ENCODE measurements at regions of chr18 and their contacts with region 1.

Region 1: DNA sequence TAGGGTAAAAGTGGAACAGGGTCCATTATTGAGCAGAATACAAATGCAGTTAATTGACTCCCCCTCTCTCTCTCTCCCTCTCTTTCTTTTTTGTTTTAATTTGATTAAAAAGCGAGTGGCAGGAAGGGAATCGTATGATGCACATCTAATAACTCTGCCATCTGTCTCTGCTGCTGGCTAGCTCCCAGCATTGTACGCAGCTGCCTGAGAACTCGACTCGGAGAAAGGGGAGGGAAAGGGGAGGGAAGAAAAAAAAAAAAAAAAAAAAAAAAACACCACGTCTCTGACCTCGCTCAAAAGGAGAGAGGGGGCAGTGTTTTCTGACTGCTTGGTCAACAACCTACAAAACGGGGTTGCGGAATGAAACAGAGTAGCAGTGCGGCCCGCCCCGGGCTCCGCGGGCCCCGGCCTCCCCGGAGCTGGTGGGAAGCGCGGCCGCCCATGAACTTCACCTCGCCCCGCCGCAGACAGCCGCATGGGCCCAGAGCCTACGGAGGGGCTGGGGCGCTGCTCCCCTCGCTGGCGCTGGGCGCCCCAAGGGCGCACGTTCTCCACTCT is 265.7 kb downstream of the TCF4 start:
- DNase-seq: peak; percentile 59 to 89
- H3K4me3 ChIP-seq: peak overlapping the region; percentile 67 to 69
- H3K27ac ChIP-seq: peak overlapping the region; percentile 78 to 92
- H3K4me1 ChIP-seq: peaks cover 0 to 29% of the 10 kb centered on the region in 2 donors
- H3K27me3 ChIP-seq: no peaks in the 10 kb centered on the region
- CTCF ChIP-seq: peak in 1 of 3 experiments; percentile 8

Region 2: DNA sequence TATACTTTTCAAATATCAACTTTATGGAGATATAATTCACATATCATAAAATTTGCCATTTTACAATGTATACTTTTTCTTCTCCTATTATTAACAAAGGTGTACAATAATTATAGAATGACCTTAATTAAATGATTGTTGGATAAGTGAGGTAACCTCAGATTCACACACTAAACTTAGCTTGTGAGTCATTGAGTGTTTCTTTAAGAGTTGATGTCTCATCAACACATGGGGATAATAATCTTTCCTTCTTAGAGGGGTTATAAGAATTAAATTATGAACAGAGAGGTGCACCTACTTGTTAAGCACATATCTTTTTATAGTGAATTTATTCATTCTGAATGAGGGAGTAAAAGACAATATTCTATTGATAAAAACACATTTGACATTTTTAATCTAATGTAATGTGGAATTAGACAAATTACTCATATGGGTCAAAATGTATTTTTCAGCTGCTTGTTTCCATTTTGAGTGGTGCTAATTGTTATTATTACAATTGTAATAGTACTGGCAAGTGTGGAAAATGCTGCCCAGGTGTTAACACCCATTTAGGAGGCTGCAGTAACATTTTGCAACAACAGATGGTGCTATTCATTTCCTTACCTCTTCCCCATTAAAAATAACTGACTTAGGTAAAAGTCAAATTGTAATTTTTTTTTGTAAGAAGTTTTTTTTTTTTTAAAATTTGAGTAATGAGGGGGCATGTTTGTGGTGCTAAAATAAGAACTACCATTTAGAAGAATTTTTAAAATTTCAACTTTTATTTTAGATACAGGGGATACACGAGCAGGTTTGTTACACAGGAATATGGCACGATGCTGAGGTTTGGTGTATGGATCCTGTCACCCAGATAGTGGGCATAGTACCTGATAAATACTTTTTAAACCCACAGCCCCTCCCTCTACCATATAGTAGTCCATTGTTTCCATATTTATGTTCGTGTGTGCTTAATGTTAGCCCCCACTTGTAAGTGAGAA is 763.4 kb before region 1 on chr18:
- intact Hi-C with region 1: no loop called
- DNase-seq: no peak
- H3K4me3 ChIP-seq: no peak overlapping the region
- H3K27ac ChIP-seq: no peak overlapping the region
- H3K4me1 ChIP-seq: no peaks in the 10 kb centered on the region
- H3K27me3 ChIP-seq: no peaks in the 10 kb centered on the region
- CTCF ChIP-seq: peak in 1 of 3 experiments; percentile 31

Region 3: DNA sequence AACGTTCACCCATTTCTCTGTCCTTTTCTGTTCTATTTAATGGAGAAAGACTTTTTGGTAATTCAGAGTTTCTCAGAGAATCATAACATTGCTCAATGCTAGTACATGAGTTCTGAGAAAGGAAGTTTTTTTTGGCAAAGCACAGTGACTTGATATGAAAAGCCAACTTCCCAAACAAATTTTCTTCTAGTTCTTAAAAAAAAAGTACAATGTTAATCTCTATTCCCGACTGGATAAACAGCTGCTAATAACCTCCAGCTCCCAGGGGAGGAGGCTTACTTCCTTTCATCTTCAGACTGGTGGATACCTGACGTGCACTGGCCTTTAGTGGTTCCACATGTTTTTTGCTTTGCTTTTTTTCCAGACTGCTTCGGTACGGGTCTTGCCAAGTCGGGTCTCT is 78.4 kb before region 1 on chr18:
- intact Hi-C with region 1: loop called (anchors 2 kb)
- DNase-seq: peak in 1 of 2 donors; percentile 74
- H3K4me3 ChIP-seq: peak overlapping the region; percentile 42 to 45
- H3K27ac ChIP-seq: peak overlapping the region; percentile 80 to 87
- H3K4me1 ChIP-seq: peaks cover 0 to 33% of the 10 kb centered on the region in 2 donors
- H3K27me3 ChIP-seq: no peaks in the 10 kb centered on the region
- CTCF ChIP-seq: no peak

Region 4: GRCh38 chr18:55272510-55273243 is 49.6 kb before region 1 on chr18:
- intact Hi-C with region 1: loop called (anchors 5 kb)
- DNase-seq: peak in 1 of 2 donors; percentile 67
- H3K4me3 ChIP-seq: no peak overlapping the region
- H3K27ac ChIP-seq: peak overlapping the region; percentile 48 to 70
- H3K4me1 ChIP-seq: peaks cover 0 to 3% of the 10 kb centered on the region in 2 donors
- H3K27me3 ChIP-seq: no peaks in the 10 kb centered on the region
- CTCF ChIP-seq: no peak

Region 5: DNA sequence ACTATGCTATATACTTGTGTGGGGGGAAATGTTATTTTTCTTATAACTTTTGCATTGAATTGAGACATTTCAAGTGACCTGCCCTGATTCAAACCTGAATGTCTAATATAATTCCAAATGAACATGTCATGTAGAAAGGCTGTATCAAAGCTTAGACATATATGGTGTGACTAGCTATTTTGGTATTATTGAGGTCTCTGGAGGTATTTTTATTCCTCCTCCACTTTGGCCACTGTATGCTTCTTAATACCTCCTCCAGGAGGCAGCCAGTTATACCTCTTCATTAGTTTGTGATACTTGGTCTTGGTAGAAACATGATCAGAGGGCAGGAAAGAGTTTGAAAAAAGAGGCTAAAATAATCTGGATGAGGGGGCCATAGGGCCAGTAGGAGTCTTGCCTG is 48.7 kb after region 1 on chr18:
- intact Hi-C with region 1: no loop called
- DNase-seq: no peak
- H3K4me3 ChIP-seq: no peak overlapping the region
- H3K27ac ChIP-seq: no peak overlapping the region
- H3K4me1 ChIP-seq: no peaks in the 10 kb centered on the region
- H3K27me3 ChIP-seq: no peaks in the 10 kb centered on the region
- CTCF ChIP-seq: no peak

Region 6: DNA sequence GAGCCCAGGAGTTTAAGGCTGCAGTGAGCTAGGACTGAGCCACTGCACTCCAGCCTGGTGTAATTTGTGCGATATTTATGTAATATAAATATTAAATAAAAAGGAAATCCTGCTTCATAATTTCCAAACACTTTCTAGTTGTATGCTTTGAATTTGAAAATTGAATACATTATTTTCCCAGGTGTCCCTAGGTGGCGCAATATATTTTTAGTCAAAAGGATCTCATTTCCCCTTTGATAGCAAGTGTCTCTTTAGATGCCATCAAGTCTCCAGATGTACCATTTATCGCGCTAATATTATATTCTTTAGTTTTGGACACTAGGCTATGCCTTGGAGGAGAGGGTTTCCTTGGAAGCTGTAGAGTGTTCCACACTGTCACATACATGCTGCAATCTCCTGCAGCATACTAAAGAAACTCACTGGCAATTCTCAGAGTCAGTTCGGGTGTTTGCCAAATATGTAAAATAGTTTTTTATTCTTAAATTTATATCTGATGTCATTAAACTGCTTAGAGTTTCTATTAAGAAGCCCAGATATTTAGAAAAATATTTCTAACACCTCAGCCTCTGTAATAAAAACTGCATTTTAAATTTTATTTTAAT is 1323.3 kb after region 1 on chr18:
- intact Hi-C with region 1: loop called (anchors 10 kb)
- DNase-seq: no peak
- H3K4me3 ChIP-seq: no peak overlapping the region
- H3K27ac ChIP-seq: no peak overlapping the region
- H3K4me1 ChIP-seq: no peaks in the 10 kb centered on the region
- H3K27me3 ChIP-seq: no peaks in the 10 kb centered on the region
- CTCF ChIP-seq: peak in 1 of 3 experiments; percentile 34